ENCODE measurements at regions of chr4 and their contacts with region 1.

Region 1: GRCh38 chr4:77618383-77619122 is 12.9 kb downstream of the CXCL13 start:
- DNase-seq: peak; percentile 63 to 66
- H3K4me3 ChIP-seq: peak overlapping the region in 1 of 3 donors; percentile 31
- H3K27ac ChIP-seq: no peak overlapping the region
- H3K4me1 ChIP-seq: no peaks in the 10 kb centered on the region
- H3K27me3 ChIP-seq: no peaks in the 10 kb centered on the region
- CTCF ChIP-seq: peak; percentile 72 to 81 (median 74)
- POLR2A ChIP-seq: no peak

Region 2: GRCh38 chr4:76718831-76719230 is 899.7 kb before region 1 on chr4:
- intact Hi-C with region 1: no loop called
- DNase-seq: no peak
- H3K4me3 ChIP-seq: no peak overlapping the region
- H3K27ac ChIP-seq: peak overlapping the region; percentile 69 to 76
- H3K4me1 ChIP-seq: peaks cover 0 to 19% of the 10 kb centered on the region in 2 donors
- H3K27me3 ChIP-seq: no peaks in the 10 kb centered on the region
- CTCF ChIP-seq: no peak
- POLR2A ChIP-seq: no peak

Region 3: GRCh38 chr4:77586951-77587383 is 31.6 kb before region 1 on chr4:
- intact Hi-C with region 1: loop called (anchors 1 kb)
- DNase-seq: no peak
- H3K4me3 ChIP-seq: no peak overlapping the region
- H3K27ac ChIP-seq: no peak overlapping the region
- H3K4me1 ChIP-seq: no peaks in the 10 kb centered on the region
- H3K27me3 ChIP-seq: no peaks in the 10 kb centered on the region
- CTCF ChIP-seq: no peak
- POLR2A ChIP-seq: no peak